Activated T-helper 2 cell treated with anti-CD3 and anti-CD28 coated beads, Interferon-gamma antibody, Interleukin-2, Interleukin-4, amounts not matched to agents 10 μg/mL and 5 μg/mL and 100 μg/mL, durations not matched to agents 14 hours and 24 hours and 36 hours (primary cell): ENCODE measurements at regions of chr6 and their contacts with region 1.

Region 1: DNA sequence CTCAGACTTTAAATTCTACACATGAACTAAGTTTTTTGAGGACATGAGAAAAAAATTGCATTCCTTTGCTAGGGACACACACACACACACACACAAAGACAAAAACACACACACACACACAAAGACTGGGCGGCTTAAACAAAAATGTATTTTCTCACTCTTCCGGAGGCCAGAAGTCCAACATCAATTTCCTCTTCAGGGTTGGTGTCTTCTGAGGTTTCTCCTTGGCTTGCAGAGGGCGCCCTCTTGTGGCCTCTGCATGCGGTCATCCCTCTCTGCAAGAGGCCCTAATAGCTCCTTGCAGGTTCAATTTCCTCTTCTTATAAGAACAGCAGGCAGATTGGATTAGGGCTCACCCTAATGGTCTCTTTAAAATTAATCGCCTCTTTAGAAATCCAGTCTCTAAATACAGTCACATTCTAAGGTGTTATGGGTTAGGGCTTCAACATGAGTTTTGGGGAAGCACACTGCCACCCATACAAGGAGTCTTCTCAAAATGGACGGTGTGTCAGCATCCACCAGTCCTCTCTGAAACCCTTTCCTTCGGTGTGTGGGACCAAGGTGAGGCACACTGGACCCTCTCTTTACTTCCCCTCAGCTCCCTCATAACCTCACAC is 61.4 kb downstream of the GPR6 start:
- DNase-seq: peak; percentile 73
- H3K4me3 Mint-ChIP-seq: peak overlapping the region; percentile 76
- H3K27ac Mint-ChIP-seq: peak overlapping the region; percentile 73
- H3K4me1 Mint-ChIP-seq: peaks cover 17% of the 10 kb centered on the region
- H3K27me3 Mint-ChIP-seq: peaks cover 2% of the 10 kb centered on the region

Region 2: DNA sequence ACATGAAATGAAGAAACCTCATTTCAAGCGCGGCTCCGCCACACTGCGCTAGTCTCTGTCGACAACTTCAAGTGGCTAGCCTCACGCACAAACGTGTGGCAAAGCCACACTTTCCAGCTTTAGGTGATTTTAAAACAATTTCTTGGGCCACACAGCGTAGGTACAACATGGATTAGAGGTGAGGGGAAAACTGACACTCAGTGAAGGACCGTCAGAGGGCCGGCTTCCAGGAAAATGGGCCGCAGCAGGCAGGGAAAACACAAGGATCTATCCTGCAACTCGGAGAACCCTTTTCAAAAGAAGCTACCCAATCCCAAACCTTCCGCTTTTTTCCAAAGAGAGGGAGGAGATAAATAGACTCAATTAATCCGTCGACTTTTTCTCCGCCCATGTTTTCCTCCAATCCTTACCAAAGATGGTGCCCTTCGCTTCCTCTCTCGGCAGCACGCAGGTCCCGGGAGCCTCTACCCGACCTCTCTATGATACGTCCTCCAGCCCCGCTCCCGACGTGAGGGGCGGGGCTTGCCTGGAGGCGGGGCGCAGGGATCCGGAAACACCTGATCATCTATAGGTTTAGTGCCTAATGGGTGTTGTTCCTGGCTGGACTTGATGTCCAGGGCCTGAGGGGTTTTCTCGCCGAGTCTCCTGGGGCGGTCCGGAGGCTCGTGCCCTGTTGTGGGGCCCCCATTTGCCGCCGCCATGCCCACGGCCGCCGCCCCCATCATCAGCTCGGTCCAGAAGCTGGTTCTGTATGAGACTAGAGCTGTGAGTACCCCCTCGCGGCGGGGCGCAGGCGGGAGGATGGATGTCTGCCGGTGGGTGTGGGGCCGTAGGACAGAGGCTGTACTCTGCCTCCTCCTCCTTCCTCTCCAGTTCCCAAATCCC is 348.5 kb before region 1 on chr6 and contains the starts of genes AK9 and FIG4:
- intact Hi-C with region 1: loop called (anchors 5 kb)
- DNase-seq: peak; percentile 84
- H3K4me3 Mint-ChIP-seq: peak within 1 kb of the TSS; percentile 96
- H3K27ac Mint-ChIP-seq: peak within 1 kb of the TSS; percentile 86
- H3K4me1 Mint-ChIP-seq: peaks cover 26% of the 10 kb centered on the region
- H3K27me3 Mint-ChIP-seq: peaks cover 10% of the 10 kb centered on the region
- total RNA-seq, gene AK9: 3.1 and 3.8 TPM in 2 replicates
- total RNA-seq, gene FIG4: 8.8 and 9.5 TPM in 2 replicates

Region 3: DNA sequence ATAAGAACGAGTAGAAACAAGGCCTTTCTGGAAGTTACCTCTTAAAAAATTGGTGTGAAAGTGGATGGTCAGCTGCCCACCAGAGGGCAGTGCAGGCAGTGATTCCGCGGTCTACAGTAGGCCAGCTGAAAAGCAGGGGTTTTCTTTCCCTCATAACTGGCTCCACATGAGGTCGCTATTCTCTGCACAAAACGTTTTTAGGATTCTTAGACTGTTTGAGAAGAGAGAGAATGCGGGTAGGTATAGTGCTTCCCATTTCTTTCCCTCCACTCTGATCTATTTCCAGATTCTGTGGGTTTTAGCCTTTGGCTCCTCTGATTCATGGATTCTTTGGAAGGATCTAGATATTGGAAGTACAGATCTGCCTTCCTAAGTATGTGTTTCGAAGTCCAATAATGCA is 334.2 kb before region 1 on chr6:
- intact Hi-C with region 1: loop called (anchors 1 kb)
- DNase-seq: peak; percentile 65
- H3K4me3 Mint-ChIP-seq: no peak overlapping the region
- H3K27ac Mint-ChIP-seq: no peak overlapping the region
- H3K4me1 Mint-ChIP-seq: peaks cover 2% of the 10 kb centered on the region
- H3K27me3 Mint-ChIP-seq: peaks cover 2% of the 10 kb centered on the region

Region 4: DNA sequence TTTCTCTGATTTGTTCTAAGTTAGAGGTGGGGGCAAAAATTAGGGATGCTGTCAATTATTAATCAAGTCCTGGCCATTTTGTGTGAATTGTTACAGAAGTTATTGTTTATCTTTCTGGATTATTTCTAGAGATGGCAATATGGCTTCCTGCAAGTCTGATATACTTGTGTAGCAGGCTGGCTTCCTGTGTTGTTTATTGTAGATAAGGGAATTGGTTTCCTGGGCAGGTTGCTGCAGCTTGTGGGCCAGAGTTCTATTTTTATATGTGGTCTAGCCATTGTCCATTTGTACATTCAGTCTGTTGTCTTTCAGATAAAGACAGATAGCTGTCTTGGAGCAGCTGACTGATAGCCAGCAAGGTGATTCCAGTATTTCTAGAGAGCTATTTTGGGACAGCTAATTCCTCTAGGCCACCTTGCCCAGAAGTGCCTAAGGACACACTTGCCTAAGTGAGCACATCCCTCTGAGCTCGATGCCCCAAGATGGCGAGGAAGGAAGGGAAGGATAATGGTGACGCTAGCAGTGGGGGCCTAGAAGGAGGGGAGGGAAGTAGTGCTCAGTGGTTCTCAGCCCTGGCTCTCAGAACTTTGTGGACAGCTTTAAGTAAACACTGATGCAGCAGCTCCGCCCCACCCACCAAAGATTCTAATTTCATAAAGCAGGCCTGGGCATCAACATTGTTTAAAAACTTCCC is 350.4 kb after region 1 on chr6:
- intact Hi-C with region 1: loop called (anchors 1 kb)
- DNase-seq: no peak
- H3K4me3 Mint-ChIP-seq: no peak overlapping the region
- H3K27ac Mint-ChIP-seq: no peak overlapping the region
- H3K4me1 Mint-ChIP-seq: peaks cover 17% of the 10 kb centered on the region
- H3K27me3 Mint-ChIP-seq: no peaks in the 10 kb centered on the region